ENCODE measurements at regions of chr3 and their contacts with region 1.

Region 1: GRCh38 chr3:125916376-125916978 is 52.5 kb upstream of the ROPN1B start:
- DNase-seq: peak; percentile 99
- ATAC-seq: peak; percentile 94
- H3K4me3 Mint-ChIP-seq: peak overlapping the region; percentile 82
- H3K27ac Mint-ChIP-seq: peak overlapping the region; percentile 72
- H3K4me1 Mint-ChIP-seq: peaks cover 28% of the 10 kb centered on the region
- H3K27me3 Mint-ChIP-seq: no peaks in the 10 kb centered on the region

Region 2: GRCh38 chr3:125594581-125595011 is 321.9 kb before region 1 on chr3:
- CTCF ChIA-PET with region 1: no interaction called
- POLR2A ChIA-PET with region 1: no interaction called
- intact Hi-C with region 1: loop called in 1 of 2 experiments (anchors 1 kb)
- DNase-seq: peak; percentile 42
- ATAC-seq: no peak
- H3K4me3 Mint-ChIP-seq: peak overlapping the region; percentile 92
- H3K27ac Mint-ChIP-seq: peak overlapping the region; percentile 91
- H3K4me1 Mint-ChIP-seq: peaks cover 24% of the 10 kb centered on the region
- H3K27me3 Mint-ChIP-seq: no peaks in the 10 kb centered on the region

Region 3: DNA sequence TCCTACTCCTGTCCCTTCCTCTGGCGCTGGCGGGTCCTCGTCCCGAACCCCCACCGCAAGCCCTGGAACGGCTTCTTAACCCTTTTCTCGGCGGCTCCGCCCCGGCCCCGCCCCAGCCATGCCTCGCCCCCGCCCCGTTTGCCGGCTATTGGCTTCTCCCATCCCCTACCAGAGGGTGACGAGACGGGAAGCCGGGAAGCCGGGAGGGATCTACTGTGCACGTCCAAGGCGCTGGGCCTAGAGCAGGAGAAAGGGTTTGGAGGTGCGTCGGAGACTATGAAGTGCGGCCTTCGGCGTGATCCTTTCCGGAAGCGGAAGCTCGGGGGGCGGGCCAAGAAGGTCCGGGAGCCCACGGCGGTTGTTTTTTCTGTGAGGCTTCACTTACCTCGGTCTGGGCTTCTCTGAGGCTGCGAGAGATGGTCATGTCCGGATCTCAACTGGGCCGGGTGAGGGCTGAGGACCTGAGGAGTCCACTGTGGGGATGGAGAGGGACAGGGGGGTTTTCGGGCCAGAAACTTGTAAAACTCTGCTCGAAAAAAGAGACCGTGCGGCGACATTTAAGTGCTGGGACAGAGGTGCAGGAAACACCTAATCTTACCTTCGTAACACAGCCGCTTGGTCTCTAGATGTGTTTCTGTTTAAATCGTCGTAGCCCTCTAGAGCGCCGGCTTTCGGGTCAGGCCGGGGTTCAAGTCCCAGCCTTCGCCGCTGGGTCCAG is 73.9 kb after region 1 on chr3:
- CTCF ChIA-PET with region 1: no interaction called
- POLR2A ChIA-PET with region 1: no interaction called
- intact Hi-C with region 1: loop called (anchors 1 to 5 kb)
- DNase-seq: peak; percentile 87
- ATAC-seq: peak; percentile 94
- H3K4me3 Mint-ChIP-seq: peak overlapping the region; percentile 97
- H3K27ac Mint-ChIP-seq: peak overlapping the region; percentile 96
- H3K4me1 Mint-ChIP-seq: peaks cover 25% of the 10 kb centered on the region
- H3K27me3 Mint-ChIP-seq: no peaks in the 10 kb centered on the region

Region 4: GRCh38 chr3:126357295-126358037 is 441.0 kb after region 1 on chr3 and contains the start of gene KLF15:
- CTCF ChIA-PET with region 1: no interaction called
- POLR2A ChIA-PET with region 1: no interaction called
- intact Hi-C with region 1: loop called (anchors 2 to 5 kb)
- DNase-seq: peak; percentile 87
- ATAC-seq: peak; percentile 95
- H3K4me3 Mint-ChIP-seq: peak within 1 kb of the TSS; percentile 73
- H3K27ac Mint-ChIP-seq: no peak within 1 kb of the TSS
- H3K4me1 Mint-ChIP-seq: peaks cover 9% of the 10 kb centered on the region
- H3K27me3 Mint-ChIP-seq: peaks cover 44% of the 10 kb centered on the region
- total RNA-seq, gene KLF15: 0.32 to 0.53 TPM

Region 5: GRCh38 chr3:126703512-126704462 is 787.3 kb after region 1 on chr3 and contains the start of gene CHCHD6:
- CTCF ChIA-PET with region 1: no interaction called
- POLR2A ChIA-PET with region 1: no interaction called
- intact Hi-C with region 1: loop called in 1 of 2 experiments (anchors 2 kb)
- DNase-seq: peak; percentile 98
- ATAC-seq: peak; percentile 99
- H3K4me3 Mint-ChIP-seq: peak within 1 kb of the TSS; percentile 92
- H3K27ac Mint-ChIP-seq: peak within 1 kb of the TSS; percentile 82
- H3K4me1 Mint-ChIP-seq: peaks cover 23% of the 10 kb centered on the region
- H3K27me3 Mint-ChIP-seq: peaks cover 9% of the 10 kb centered on the region
- total RNA-seq, gene CHCHD6: 17.1 to 17.7 TPM

Measured in activated CD4-positive, alpha-beta T cell treated with anti-CD3 and anti-CD28 coated beads for 36 hours (primary cell).